ENCODE measurements at regions of chr2 and their contacts with region 1.

Region 1: GRCh38 chr2:74119912-74120825 is 27.5 kb downstream of the BOLA3 start:
- DNase-seq: peak; percentile 90 to 95
- H3K4me3 ChIP-seq: peak overlapping the region; percentile 56
- H3K4me3 Mint-ChIP-seq: peak overlapping the region; percentile 91
- H3K27ac Mint-ChIP-seq: peak overlapping the region; percentile 98
- H3K4me1 ChIP-seq: no peaks in the 10 kb centered on the region
- H3K4me1 Mint-ChIP-seq: no peaks in the 10 kb centered on the region
- H3K27me3 ChIP-seq: no peaks in the 10 kb centered on the region
- H3K27me3 Mint-ChIP-seq: peaks cover 5% of the 10 kb centered on the region
- CTCF ChIP-seq: peak; percentile 53 to 79

Region 2: DNA sequence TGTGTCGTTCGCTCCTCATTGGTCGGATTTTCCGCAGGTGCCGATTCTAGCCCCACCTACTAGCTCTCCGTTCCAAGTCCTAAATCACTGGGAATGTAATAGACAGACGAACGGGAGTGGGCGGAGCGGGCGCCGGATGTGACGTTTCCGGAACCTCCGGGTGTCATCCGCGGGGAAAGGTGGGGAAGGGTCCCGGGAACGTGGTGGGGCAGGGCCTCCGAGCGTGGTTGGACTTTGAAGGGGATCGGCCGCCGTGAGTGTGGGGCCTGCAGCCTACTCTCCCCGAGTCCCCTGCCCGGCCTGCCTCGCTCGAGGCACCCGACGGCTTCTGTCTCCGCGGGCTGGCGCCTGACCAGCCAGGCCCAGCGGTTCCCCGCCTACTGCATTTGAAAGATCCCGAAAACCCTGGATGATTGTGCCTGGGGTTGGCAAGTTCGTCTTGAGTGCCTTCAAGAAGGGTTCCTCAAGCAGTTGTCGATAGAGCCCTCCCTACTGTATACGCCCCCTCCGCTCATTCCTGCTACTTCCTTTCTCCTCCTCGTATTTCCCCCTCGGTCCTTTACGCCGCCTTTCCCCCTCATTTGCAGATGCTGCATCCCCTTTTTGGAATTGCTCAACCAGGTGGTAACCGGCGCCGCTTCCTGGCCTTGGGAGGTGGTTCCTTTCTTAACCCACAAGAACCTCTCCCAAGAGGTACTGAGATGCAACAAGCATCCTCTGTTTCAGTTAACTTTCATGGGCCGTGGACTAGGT is 291.2 kb before region 1 on chr2 and contains the start of gene STAMBP:
- CTCF ChIA-PET with region 1: interaction called, 7 read pairs
- POLR2A ChIA-PET with region 1: interaction called, 18 read pairs
- intact Hi-C with region 1: no loop called
- DNase-seq: peak; percentile 96
- H3K4me3 ChIP-seq: peak within 1 kb of the TSS; percentile 75
- H3K4me3 Mint-ChIP-seq: peak within 1 kb of the TSS; percentile 84
- H3K27ac Mint-ChIP-seq: peak within 1 kb of the TSS; percentile 93
- H3K4me1 ChIP-seq: peaks cover 3% of the 10 kb centered on the region; the same call in 1 of the 2 replicates
- H3K4me1 Mint-ChIP-seq: peaks cover 9% of the 10 kb centered on the region
- H3K27me3 ChIP-seq: no peaks in the 10 kb centered on the region
- H3K27me3 Mint-ChIP-seq: no peaks in the 10 kb centered on the region
- CTCF ChIP-seq: no peak
- total RNA-seq, gene STAMBP: 49.8 and 50.1 TPM in 2 replicates

Region 3: GRCh38 chr2:73984203-73984921 is 135.8 kb before region 1 on chr2 and contains the start of gene TET3:
- CTCF ChIA-PET with region 1: interaction called, 4 read pairs
- POLR2A ChIA-PET with region 1: interaction called, 4 read pairs
- intact Hi-C with region 1: loop called (anchors 5 kb)
- DNase-seq: peak; percentile 60 to 72
- H3K4me3 ChIP-seq: peak within 1 kb of the TSS; percentile 87
- H3K4me3 Mint-ChIP-seq: peak within 1 kb of the TSS; percentile 95
- H3K27ac Mint-ChIP-seq: peak within 1 kb of the TSS; percentile 99
- H3K4me1 ChIP-seq: peaks cover 55% of the 10 kb centered on the region
- H3K4me1 Mint-ChIP-seq: peaks cover 33% of the 10 kb centered on the region
- H3K27me3 ChIP-seq: no peaks in the 10 kb centered on the region
- H3K27me3 Mint-ChIP-seq: peaks cover 8% of the 10 kb centered on the region
- CTCF ChIP-seq: no peak
- total RNA-seq, gene TET3: 27.5 and 27.8 TPM in 2 replicates

Region 4: GRCh38 chr2:74147727-74148456 is 27.7 kb after region 1 on chr2 and contains the start of gene BOLA3:
- CTCF ChIA-PET with region 1: interaction called, 12 read pairs
- POLR2A ChIA-PET with region 1: interaction called, 7 read pairs
- intact Hi-C with region 1: loop called (anchors 1 kb)
- DNase-seq: peak; percentile 93 to 97
- H3K4me3 ChIP-seq: peak within 1 kb of the TSS; percentile 68
- H3K4me3 Mint-ChIP-seq: no peak within 1 kb of the TSS
- H3K27ac Mint-ChIP-seq: no peak within 1 kb of the TSS
- H3K4me1 ChIP-seq: peaks cover 7% of the 10 kb centered on the region; the same call in 1 of the 2 replicates
- H3K4me1 Mint-ChIP-seq: peaks cover 6% of the 10 kb centered on the region
- H3K27me3 ChIP-seq: no peaks in the 10 kb centered on the region
- H3K27me3 Mint-ChIP-seq: no peaks in the 10 kb centered on the region
- CTCF ChIP-seq: peak; percentile 58 to 75
- total RNA-seq, gene BOLA3: 71.5 and 79.7 TPM in 2 replicates

Region 5: DNA sequence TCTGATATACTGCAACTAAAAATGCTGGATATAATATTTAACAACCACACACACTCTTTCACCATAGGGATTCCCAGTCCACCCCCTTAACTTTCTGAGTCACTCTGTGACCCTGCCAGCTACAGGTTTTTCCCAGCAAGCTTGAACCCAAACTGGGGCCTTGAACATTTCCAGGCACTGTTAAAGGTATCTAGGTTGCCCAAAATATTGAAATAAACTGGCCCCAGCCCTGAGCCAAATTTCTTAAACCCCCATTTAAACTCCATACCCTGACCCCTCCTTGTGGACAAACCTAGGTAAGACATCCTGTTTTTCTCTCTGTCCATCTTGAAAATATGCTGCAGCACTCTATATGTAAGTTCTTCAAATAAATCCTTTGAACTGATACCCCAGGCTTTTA is 279.6 kb after region 1 on chr2:
- CTCF ChIA-PET with region 1: interaction called, 11 read pairs
- POLR2A ChIA-PET with region 1: no interaction called
- intact Hi-C with region 1: no loop called
- DNase-seq: peak in 1 of 2 experiments; percentile 39
- H3K4me3 ChIP-seq: no peak overlapping the region
- H3K4me3 Mint-ChIP-seq: no peak overlapping the region
- H3K27ac Mint-ChIP-seq: no peak overlapping the region
- H3K4me1 ChIP-seq: no peaks in the 10 kb centered on the region
- H3K4me1 Mint-ChIP-seq: no peaks in the 10 kb centered on the region
- H3K27me3 ChIP-seq: no peaks in the 10 kb centered on the region
- H3K27me3 Mint-ChIP-seq: peaks cover 7% of the 10 kb centered on the region
- CTCF ChIP-seq: peak in 1 of 2 experiments; percentile 38

Measured in Caco-2 (cell line).